HCT116 (cell line): ENCODE measurements at regions of chr7 and their contacts with region 1.

Region 1: GRCh38 chr7:23546897-23547572 is 15.3 kb upstream of the TRA2A start:
- DNase-seq: peak; percentile 88
- ATAC-seq: peak; percentile 87
- H3K4me3 ChIP-seq: no peak overlapping the region
- H3K27ac ChIP-seq: no peak overlapping the region
- H3K4me1 ChIP-seq: peaks cover 4 to 7% of the 10 kb centered on the region in 2 experiments; a peak in 3 of 4 replicates
- H3K27me3 ChIP-seq: no peaks in the 10 kb centered on the region
- CTCF ChIP-seq: peak; percentile 83 to 99 (median 98)
- POLR2A ChIP-seq: no peak
- RAD21 ChIP-seq: peak; percentile 95

Region 2: GRCh38 chr7:23181684-23182553 is 365.1 kb before region 1 on chr7 and contains the start of gene NUP42:
- CTCF ChIA-PET with region 1: interaction called, 7 read pairs
- POLR2A ChIA-PET with region 1: no interaction called
- RAD21 ChIA-PET with region 1: no interaction called
- intact Hi-C with region 1: loop called (anchors 5 kb)
- DNase-seq: peak; percentile 99
- ATAC-seq: peak; percentile 94
- H3K4me3 ChIP-seq: peak within 1 kb of the TSS; percentile 89 to 92
- H3K27ac ChIP-seq: peak within 1 kb of the TSS; percentile 78
- H3K4me1 ChIP-seq: peaks cover 5 to 14% of the 10 kb centered on the region in 2 experiments; a peak in 3 of 4 replicates
- H3K27me3 ChIP-seq: no peaks in the 10 kb centered on the region
- CTCF ChIP-seq: no peak
- POLR2A ChIP-seq: peak; percentile 76
- RAD21 ChIP-seq: no peak
- total RNA-seq, gene NUP42: 36.5 TPM

Region 3: DNA sequence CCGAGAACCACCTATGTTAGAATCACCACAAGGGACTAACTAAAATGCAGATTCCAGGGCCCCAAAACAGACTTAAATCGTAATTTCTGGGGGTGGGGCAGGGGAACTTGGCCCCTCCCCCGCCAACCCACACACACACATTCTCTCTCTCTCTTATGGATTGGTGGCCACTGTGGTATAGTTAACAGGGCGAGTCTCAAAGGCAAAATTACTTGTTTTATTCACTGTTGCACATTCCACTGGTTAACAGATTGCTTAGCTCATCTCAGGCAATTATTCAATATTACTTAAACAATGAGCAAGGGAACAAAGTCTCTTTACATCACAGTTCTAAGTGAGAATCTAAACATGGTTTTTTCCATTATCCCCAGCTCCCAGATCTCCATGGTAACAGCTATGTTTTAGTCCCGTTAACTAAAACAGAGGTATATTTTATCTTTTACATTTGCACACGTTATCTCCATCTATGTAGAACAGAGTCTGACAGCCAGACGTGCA is 115.3 kb before region 1 on chr7:
- CTCF ChIA-PET with region 1: interaction called, 7 read pairs
- POLR2A ChIA-PET with region 1: no interaction called
- RAD21 ChIA-PET with region 1: no interaction called
- intact Hi-C with region 1: loop called (anchors 1 kb)
- DNase-seq: no peak
- ATAC-seq: no peak
- H3K4me3 ChIP-seq: no peak overlapping the region
- H3K27ac ChIP-seq: no peak overlapping the region
- H3K4me1 ChIP-seq: peaks cover 15 to 27% of the 10 kb centered on the region in 2 experiments
- H3K27me3 ChIP-seq: no peaks in the 10 kb centered on the region
- CTCF ChIP-seq: no peak
- POLR2A ChIP-seq: no peak
- RAD21 ChIP-seq: no peak

Region 4: DNA sequence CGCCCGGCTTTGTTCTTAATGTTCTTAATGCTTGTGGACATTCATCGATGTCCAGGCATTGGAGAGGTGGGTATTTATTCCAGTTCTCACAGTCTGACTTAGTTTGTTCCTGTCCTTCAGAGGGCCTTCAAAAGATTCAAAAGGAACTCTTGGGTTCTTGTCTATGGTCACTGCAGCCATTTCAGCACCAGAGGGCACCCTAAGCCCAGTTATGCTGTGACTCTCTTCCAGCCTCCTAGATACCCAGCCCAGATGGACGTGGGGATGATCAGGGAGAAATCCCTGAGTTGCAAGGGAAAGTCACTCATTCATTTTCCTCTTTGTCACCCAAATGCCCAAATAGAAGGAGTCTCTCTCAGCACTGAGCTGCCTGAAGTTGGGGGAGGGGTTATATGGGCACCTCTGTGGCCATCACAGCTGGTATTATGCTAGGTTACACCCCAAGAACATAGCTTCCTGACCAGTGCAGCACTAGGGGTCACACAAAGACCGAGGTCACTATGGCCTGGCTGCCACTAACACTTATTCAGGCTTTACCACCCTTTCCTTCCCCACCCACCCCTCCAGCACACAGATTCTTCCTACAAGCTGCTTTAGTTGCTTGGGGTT is 23.7 kb after region 1 on chr7:
- CTCF ChIA-PET with region 1: interaction called, 8 read pairs
- POLR2A ChIA-PET with region 1: no interaction called
- RAD21 ChIA-PET with region 1: interaction called in 1 of 2 experiments, 3 read pairs
- intact Hi-C with region 1: loop called (anchors 1 kb)
- DNase-seq: peak; percentile 77
- ATAC-seq: peak; percentile 99
- H3K4me3 ChIP-seq: no peak overlapping the region
- H3K27ac ChIP-seq: no peak overlapping the region
- H3K4me1 ChIP-seq: peaks cover 0 to 4% of the 10 kb centered on the region in 2 experiments; a peak in 1 of 4 replicates
- H3K27me3 ChIP-seq: no peaks in the 10 kb centered on the region
- CTCF ChIP-seq: peak; percentile 86 to 91 (median 90)
- POLR2A ChIP-seq: no peak
- RAD21 ChIP-seq: peak; percentile 97